ENCODE measurements at regions of chr15 and their contacts with region 1.

Region 1: GRCh38 chr15:94324117-94324826 is 92.9 kb downstream of the MCTP2 start:
- DNase-seq: peak; percentile 76
- ATAC-seq: peak; percentile 87
- H3K4me3 Mint-ChIP-seq: no peak overlapping the region
- H3K27ac Mint-ChIP-seq: no peak overlapping the region
- H3K4me1 Mint-ChIP-seq: peaks cover 4% of the 10 kb centered on the region
- H3K27me3 Mint-ChIP-seq: no peaks in the 10 kb centered on the region

Region 2: DNA sequence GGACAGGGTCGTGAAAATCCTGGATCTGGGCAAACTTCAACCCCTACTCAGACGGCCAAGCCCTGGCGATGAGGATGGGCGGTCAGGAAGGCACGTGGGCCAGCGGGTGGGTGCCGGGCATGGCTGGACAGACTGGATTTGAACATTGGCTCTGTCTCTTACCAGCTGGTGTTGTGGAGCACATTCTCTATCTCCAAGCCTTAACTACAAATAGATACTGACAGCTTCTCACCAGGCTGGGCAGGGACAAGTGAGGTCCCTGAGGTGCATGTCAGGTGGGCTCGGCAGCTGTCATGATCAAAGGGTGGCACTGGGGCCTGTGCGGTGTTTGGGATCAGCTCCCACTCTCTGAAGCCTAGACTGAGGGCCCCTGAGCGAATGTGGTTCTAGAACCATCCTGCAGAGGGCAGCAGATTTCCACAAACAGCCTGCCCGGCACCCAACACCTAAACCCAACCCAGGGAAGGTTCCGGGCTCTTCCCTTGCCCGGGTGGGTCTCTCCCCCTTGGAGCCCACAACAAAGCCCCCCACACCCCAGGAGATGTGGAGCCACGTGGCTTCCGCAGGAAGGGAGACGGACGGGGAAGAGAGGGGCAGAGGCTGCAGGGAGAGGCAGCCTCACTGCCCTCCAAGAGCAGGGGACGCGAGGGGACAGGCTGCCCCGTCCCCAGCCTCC is 1293.7 kb before region 1 on chr15:
- CTCF ChIA-PET with region 1: no interaction called
- POLR2A ChIA-PET with region 1: no interaction called
- intact Hi-C with region 1: loop called in 1 of 2 experiments (anchors 10 kb)
- DNase-seq: peak; percentile 79
- ATAC-seq: peak; percentile 87
- H3K4me3 Mint-ChIP-seq: no peak overlapping the region
- H3K27ac Mint-ChIP-seq: peak overlapping the region; percentile 16
- H3K4me1 Mint-ChIP-seq: peaks cover 37% of the 10 kb centered on the region
- H3K27me3 Mint-ChIP-seq: no peaks in the 10 kb centered on the region

Region 3: DNA sequence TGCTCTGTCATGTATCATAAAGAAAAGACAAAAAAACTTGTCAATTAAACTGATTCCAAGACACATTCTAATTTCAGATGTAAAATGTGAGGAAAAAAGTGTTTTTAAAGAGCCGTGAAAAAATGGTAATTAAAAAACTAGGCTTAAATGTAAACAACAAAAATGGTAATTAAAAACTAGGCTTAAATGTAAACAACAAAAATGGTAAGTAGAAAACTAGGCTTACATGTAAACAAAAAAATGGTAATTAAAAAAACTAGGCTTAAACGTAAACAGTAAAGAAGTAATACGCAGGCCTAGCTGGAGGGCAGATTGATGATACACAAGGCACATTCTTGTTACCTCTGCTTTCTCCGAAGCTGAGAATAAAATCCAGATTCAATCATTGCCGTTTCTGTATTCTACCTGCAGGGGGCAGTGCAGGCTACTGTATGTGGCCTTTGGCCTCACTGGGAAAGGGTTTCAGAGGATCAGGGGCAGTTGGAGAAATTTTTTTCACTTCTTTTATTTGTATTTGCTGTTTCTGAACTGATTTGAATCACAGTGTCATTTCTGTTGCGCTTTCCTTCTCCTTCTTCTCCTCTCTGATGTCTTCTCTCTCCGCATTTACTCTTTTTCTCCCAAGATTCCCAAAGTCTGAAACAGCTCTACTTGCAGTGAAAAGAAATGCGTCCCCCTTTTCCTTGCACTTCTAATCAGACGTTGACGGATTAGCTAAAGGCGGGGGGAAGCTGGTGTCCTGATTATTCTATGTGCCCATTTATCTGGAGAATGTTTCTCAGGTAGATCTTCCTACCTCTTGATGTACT is 160.1 kb before region 1 on chr15:
- CTCF ChIA-PET with region 1: interaction called, 213 read pairs
- POLR2A ChIA-PET with region 1: no interaction called
- intact Hi-C with region 1: loop called (anchors 1 kb)
- DNase-seq: peak; percentile 75
- ATAC-seq: peak; percentile 49
- H3K4me3 Mint-ChIP-seq: no peak overlapping the region
- H3K27ac Mint-ChIP-seq: no peak overlapping the region
- H3K4me1 Mint-ChIP-seq: no peaks in the 10 kb centered on the region
- H3K27me3 Mint-ChIP-seq: no peaks in the 10 kb centered on the region

Region 4: GRCh38 chr15:94272251-94272898 is 51.9 kb before region 1 on chr15:
- CTCF ChIA-PET with region 1: no interaction called
- POLR2A ChIA-PET with region 1: interaction called, 3 read pairs
- intact Hi-C with region 1: loop called in 1 of 2 experiments (anchors 5 kb)
- DNase-seq: no peak
- ATAC-seq: peak; percentile 83
- H3K4me3 Mint-ChIP-seq: no peak overlapping the region
- H3K27ac Mint-ChIP-seq: no peak overlapping the region
- H3K4me1 Mint-ChIP-seq: peaks cover 9% of the 10 kb centered on the region
- H3K27me3 Mint-ChIP-seq: no peaks in the 10 kb centered on the region

Region 5: GRCh38 chr15:94306700-94307650 is 17.3 kb before region 1 on chr15:
- CTCF ChIA-PET with region 1: interaction called, 14 read pairs
- POLR2A ChIA-PET with region 1: no interaction called
- intact Hi-C with region 1: no loop called
- DNase-seq: peak; percentile 38
- ATAC-seq: peak; percentile 74
- H3K4me3 Mint-ChIP-seq: no peak overlapping the region
- H3K27ac Mint-ChIP-seq: peak overlapping the region; percentile 87
- H3K4me1 Mint-ChIP-seq: peaks cover 43% of the 10 kb centered on the region
- H3K27me3 Mint-ChIP-seq: no peaks in the 10 kb centered on the region

Region 6: DNA sequence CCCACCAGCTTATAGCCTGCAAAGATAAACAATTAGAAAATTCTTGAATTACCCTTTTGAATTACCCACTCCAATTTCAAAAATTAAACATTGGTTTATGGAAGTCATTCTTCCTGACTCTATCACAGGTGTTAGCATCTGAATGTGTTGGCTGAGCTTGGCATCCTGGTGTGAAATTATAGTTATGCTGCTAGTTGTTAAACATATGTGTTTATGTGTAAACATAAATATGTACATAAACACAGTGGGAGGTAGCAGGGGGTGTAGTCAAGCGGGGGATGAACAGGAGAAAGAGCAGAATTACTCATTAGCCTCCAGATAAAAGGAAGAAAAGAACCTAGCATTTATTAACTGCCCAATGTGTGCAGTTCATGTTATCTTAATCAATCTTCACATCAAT is 437.3 kb after region 1 on chr15:
- CTCF ChIA-PET with region 1: no interaction called
- POLR2A ChIA-PET with region 1: no interaction called
- intact Hi-C with region 1: no loop called
- DNase-seq: no peak
- ATAC-seq: no peak
- H3K4me3 Mint-ChIP-seq: no peak overlapping the region
- H3K27ac Mint-ChIP-seq: no peak overlapping the region
- H3K4me1 Mint-ChIP-seq: no peaks in the 10 kb centered on the region
- H3K27me3 Mint-ChIP-seq: peaks cover 2% of the 10 kb centered on the region